A549 (cell line): ENCODE measurements at regions of chr3 and their contacts with region 1.

Region 1: DNA sequence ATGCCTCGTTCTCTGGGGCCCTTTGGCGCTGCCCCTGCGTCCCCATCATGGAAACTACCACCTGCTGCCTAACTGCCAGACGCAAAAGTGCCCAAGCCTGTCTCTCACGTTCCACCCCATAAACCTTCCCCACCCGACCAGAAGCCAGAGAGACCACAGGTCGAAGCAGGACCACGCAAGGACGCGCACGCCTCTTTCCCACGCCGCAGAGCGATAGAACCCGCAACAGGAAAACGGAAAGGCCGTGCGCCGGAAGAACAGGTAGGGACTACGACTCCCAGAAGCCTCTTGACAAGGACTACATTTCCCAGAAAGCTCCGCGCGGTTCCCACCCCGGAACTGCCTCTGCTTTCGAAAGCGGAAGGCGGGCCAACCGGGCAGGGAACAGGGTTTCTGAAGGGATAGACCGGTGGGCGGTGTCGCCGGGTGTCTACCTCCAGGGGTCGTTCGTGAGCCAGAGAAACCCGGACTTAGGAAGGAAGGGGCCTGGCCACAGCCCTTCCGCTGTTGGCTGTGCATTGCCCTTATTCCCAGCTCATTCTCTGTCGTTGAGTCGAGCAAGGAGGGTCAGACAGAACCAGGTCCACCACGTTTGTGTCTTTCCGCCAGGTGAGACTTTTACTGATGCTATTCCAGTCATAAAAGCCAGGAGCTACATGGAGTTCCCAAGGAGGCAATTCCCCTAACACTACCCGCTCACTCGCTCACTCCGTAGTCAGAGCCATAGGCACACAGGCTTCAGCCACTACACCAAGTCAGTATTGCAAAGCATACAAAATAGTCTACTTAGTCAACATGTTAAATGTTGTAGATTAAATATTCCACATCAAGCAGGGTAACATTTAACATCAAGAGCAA is 56.6 kb upstream of the ZBTB38 start:
- DNase-seq: peak; percentile 97 to 98
- ATAC-seq: peak; percentile 96 to 97
- H3K4me3 ChIP-seq: peak overlapping the region; percentile 83
- H3K27ac ChIP-seq: peak overlapping the region; percentile 89
- H3K4me1 ChIP-seq: peaks cover 14% of the 10 kb centered on the region
- CTCF ChIP-seq: peak; percentile 85
- EP300 ChIP-seq: no peak
- POLR2A ChIP-seq: peak; percentile 81
- RAD21 ChIP-seq: peak; percentile 96 to 99

Region 2: GRCh38 chr3:141294848-141295247 is 16.9 kb before region 1 on chr3:
- CTCF ChIA-PET with region 1: no interaction called
- POLR2A ChIA-PET with region 1: no interaction called
- DNase-seq: peak; percentile 30 to 33
- ATAC-seq: peak in 1 of 2 experiments; percentile 80; a peak in 3 of 6 replicates
- H3K4me3 ChIP-seq: peak overlapping the region; percentile 33; the same call in 2 of the 3 replicates
- H3K27ac ChIP-seq: peak overlapping the region; percentile 16 to 37; a peak in 1 of 6 replicates
- H3K4me1 ChIP-seq: peaks cover 9% of the 10 kb centered on the region; the same call in 1 of the 3 replicates
- CTCF ChIP-seq: no peak
- EP300 ChIP-seq: no peak
- POLR2A ChIP-seq: no peak
- RAD21 ChIP-seq: no peak

Region 3: DNA sequence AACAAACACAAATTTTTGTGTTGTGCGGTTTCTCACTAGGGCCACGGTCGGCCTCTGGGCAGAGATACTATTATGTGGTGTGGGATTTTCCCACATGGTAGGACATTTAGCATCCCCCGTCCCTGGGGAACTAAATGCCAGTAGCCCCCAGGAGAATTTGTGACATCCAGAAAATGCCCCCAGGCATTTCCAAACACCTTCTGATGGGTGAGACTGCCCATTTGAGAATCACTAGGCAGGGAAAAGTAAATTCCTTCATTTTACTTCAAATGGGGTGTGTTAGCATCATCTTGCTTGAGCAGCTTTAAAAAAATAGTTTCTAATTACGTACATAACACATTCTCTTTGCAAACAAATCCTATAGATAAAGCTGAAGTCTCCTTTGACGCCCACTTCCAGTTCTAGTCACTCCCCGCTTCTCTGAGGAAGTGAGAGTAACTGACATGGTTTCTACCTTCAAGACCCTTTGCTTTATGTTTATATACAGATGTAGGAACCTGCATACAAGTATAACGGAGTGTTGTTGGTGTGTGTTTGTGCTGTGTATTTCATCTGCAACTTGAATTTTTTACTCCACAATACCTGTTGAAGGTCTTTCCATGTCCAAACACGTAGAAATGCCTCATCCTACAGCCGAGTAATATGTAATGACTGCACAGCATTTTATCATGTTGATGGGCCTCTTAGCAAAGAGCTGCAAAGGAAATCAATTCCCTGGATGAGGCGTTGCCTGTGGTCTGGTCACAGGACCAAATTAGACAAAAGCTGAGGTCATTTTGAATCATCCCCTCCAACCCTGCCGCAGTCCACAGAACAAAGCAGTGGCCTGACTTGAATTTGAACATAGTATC is 25.2 kb after region 1 on chr3:
- CTCF ChIA-PET with region 1: interaction called, 217 read pairs
- POLR2A ChIA-PET with region 1: interaction called, 22 read pairs
- DNase-seq: peak in 1 of 2 experiments; percentile 65
- ATAC-seq: peak; percentile 66 to 82; a peak in 5 of 6 replicates
- H3K4me3 ChIP-seq: no peak overlapping the region
- H3K27ac ChIP-seq: peak overlapping the region; percentile 91 to 94
- H3K4me1 ChIP-seq: peaks cover 50% of the 10 kb centered on the region
- CTCF ChIP-seq: no peak
- EP300 ChIP-seq: peak in 1 of 2 experiments; percentile 54; a peak in 1 of 5 replicates
- POLR2A ChIP-seq: no peak
- RAD21 ChIP-seq: no peak

Region 4: GRCh38 chr3:141370065-141370533 is 58.4 kb after region 1 on chr3:
- CTCF ChIA-PET with region 1: interaction called, 11 read pairs
- POLR2A ChIA-PET with region 1: interaction called, 16 read pairs
- DNase-seq: peak; percentile 69 to 92
- ATAC-seq: peak; percentile 15 to 62; a peak in 4 of 6 replicates
- H3K4me3 ChIP-seq: peak overlapping the region; percentile 41; the same call in 1 of the 3 replicates
- H3K27ac ChIP-seq: peak overlapping the region; percentile 99 to 100
- H3K4me1 ChIP-seq: peaks cover 93% of the 10 kb centered on the region
- CTCF ChIP-seq: no peak
- EP300 ChIP-seq: no peak
- POLR2A ChIP-seq: no peak
- RAD21 ChIP-seq: peak in 1 of 2 experiments; percentile 31; a peak in 1 of 5 replicates

Region 5: DNA sequence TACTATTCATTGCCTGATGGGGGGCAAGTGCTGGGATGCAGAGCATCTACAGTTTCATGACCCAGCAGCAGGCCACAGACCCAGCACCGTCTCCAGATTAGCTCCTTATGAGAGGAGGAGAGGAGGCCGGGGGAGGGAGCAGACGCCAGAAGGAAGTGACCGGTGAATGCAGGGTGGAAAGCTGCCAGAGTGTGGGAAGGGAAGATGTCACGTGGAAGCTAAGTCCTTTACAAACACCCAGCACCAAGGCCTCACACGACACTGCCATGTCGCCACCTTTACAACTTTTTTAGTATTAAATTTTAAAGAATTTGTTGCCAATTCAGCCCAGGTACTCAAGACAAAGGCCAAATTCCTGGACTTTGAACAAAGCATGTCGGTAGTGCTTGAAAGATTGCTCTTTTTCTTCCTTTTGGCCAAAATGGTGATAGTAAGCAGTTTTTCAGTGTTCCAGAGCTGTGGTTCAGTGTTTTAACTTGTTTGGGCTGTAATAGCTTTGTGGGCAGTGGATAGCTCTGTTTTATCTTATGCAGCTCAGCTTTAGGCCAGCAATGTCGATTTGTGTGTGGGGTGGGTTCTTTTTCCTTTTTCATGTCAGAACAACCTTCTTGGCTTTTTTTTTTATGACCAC is 114.8 kb after region 1 on chr3:
- CTCF ChIA-PET with region 1: interaction called, 19 read pairs
- POLR2A ChIA-PET with region 1: interaction called, 7 read pairs
- DNase-seq: peak in 1 of 2 experiments; percentile 75
- ATAC-seq: peak in 1 of 2 experiments; percentile 42; a peak in 4 of 6 replicates
- H3K4me3 ChIP-seq: no peak overlapping the region
- H3K27ac ChIP-seq: peak overlapping the region; percentile 99 to 100
- H3K4me1 ChIP-seq: peaks cover 75% of the 10 kb centered on the region
- CTCF ChIP-seq: no peak
- EP300 ChIP-seq: no peak
- POLR2A ChIP-seq: no peak
- RAD21 ChIP-seq: no peak; a peak in 1 of 5 replicates

Region 6: GRCh38 chr3:141452036-141452435 is 140.3 kb after region 1 on chr3:
- CTCF ChIA-PET with region 1: interaction called, 354 read pairs
- POLR2A ChIA-PET with region 1: interaction called, 21 read pairs
- DNase-seq: peak; percentile 38 to 82
- ATAC-seq: peak; percentile 74 to 79
- H3K4me3 ChIP-seq: no peak overlapping the region
- H3K27ac ChIP-seq: peak overlapping the region; percentile 67 to 79
- H3K4me1 ChIP-seq: peaks cover 44% of the 10 kb centered on the region
- CTCF ChIP-seq: peak; percentile 84
- EP300 ChIP-seq: no peak
- POLR2A ChIP-seq: no peak
- RAD21 ChIP-seq: peak; percentile 96 to 98

Region 7: DNA sequence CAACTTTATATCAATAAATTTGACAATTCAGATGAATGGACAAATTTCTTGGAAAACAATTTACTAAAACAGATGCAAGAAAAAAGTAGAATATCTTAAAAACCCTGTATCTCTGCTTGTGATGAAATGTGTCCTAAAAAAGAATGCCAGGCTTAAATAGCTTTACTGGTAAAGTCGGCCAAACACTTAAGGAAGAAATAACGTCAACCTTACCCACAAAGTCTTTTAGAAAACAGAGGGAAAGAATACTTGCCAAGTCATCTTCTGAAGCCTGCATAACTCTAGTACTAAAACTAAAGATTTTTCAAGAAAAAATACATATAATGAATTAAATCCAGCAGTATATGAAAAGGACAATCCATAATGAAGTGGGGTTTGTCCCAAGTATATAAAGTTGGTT is 286.2 kb after region 1 on chr3:
- CTCF ChIA-PET with region 1: no interaction called
- POLR2A ChIA-PET with region 1: no interaction called
- DNase-seq: no peak
- ATAC-seq: no peak
- H3K4me3 ChIP-seq: no peak overlapping the region
- H3K27ac ChIP-seq: no peak overlapping the region
- H3K4me1 ChIP-seq: no peaks in the 10 kb centered on the region
- CTCF ChIP-seq: no peak
- EP300 ChIP-seq: no peak
- POLR2A ChIP-seq: no peak
- RAD21 ChIP-seq: no peak